ENCODE measurements at regions of chr10 and their contacts with region 1.

Region 1: GRCh38 chr10:93702211-93703001 is at the start of gene FRA10AC1:
- DNase-seq: peak; percentile 92 to 96
- ATAC-seq: peak; percentile 97 to 99 (median 98)
- H3K4me3 ChIP-seq: peak within 1 kb of the TSS; percentile 71
- H3K27ac ChIP-seq: peak within 1 kb of the TSS; percentile 85
- H3K4me1 ChIP-seq: peaks cover 24% of the 10 kb centered on the region
- H3K27me3 ChIP-seq: no peaks in the 10 kb centered on the region
- CTCF ChIP-seq: peak; percentile 33
- total RNA-seq, gene FRA10AC1: 6.7 to 14.0 (median 13.4) TPM

Region 2: DNA sequence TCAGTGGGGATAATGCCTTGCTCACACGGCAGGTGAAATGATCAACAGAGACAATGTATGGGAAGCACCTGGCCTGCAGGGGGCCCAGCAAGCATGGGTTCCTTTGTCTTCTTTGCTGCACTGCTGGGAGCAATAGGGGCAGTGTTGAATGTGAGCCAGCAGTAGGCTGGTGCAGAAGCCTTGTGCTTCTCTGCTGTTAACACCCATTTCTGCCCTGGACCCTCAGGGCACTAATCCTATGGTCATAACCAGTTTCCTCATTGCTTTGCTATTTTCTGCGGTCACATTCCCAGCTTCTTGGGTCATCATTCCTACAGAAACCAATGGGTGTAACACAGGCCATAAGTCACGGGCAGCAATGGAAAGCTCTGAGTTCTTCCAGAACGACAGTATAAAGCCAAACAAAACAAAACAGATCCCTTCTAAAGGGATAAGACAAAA is 44.5 kb after region 1 on chr10:
- intact Hi-C with region 1: loop called in 1 of 2 experiments (anchors 5 kb)
- DNase-seq: no peak
- ATAC-seq: no peak
- H3K4me3 ChIP-seq: no peak overlapping the region
- H3K27ac ChIP-seq: no peak overlapping the region
- H3K4me1 ChIP-seq: no peaks in the 10 kb centered on the region
- H3K27me3 ChIP-seq: no peaks in the 10 kb centered on the region
- CTCF ChIP-seq: no peak

Region 3: DNA sequence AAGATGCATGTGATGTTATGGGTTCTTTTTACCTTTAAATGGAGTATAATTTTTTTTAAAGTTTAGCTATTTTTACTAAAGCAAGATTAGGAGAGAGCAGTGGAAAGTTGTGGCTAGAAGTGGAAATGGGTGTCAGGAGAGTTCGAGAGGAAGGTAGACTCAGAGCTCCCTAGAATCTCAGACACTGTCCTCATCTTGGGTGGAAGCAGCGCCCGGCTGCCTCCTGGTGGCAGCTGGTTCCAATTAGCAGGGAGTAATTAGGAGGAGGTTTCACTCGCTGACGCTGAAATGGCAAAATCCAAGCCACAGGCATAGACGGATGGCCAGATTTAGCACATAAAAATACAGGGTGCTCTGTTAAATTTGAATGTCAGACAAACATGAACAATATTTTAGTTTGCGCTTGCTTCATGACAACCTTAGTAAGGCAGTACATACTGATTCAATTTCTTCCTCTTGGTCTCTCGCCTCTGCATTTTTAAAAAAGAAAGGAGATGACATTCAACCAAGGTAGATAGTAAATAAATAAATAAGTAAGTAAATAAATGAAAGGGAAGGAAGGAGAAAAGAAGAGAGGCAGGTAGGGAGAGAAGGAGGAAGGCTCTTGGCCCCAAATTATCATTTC is 113.8 kb after region 1 on chr10:
- intact Hi-C with region 1: loop called (anchors 5 kb)
- DNase-seq: peak; percentile 43 to 66
- ATAC-seq: peak; percentile 65 to 90 (median 72)
- H3K4me3 ChIP-seq: no peak overlapping the region
- H3K27ac ChIP-seq: no peak overlapping the region
- H3K4me1 ChIP-seq: no peaks in the 10 kb centered on the region
- H3K27me3 ChIP-seq: peaks cover 0 to 2% (median 0%) of the 10 kb centered on the region in 3 donors
- CTCF ChIP-seq: peak; percentile 65

Measured in psoas muscle (tissue), 8 donors.